PC-3 (cell line): ENCODE measurements at regions of chr13 and their contacts with region 1.

Region 1: GRCh38 chr13:37869756-37870488 is at the start of gene TRPC4:
- DNase-seq: peak; percentile 54
- ATAC-seq: peak; percentile 83
- H3K4me3 ChIP-seq: peak within 1 kb of the TSS; percentile 62
- H3K27ac ChIP-seq: no peak within 1 kb of the TSS
- H3K4me1 ChIP-seq: peaks cover 15% of the 10 kb centered on the region
- H3K27me3 ChIP-seq: peaks cover 72% of the 10 kb centered on the region
- CTCF ChIP-seq: peak; percentile 60
- total RNA-seq, gene TRPC4: 0.22 TPM in 1 of 2 replicates, not detected in the other

Region 2: GRCh38 chr13:37640499-37640898 is 229.4 kb before region 1 on chr13:
- CTCF ChIA-PET with region 1: interaction called, 4 read pairs
- POLR2A ChIA-PET with region 1: no interaction called
- intact Hi-C with region 1: loop called (anchors 5 kb)
- DNase-seq: peak; percentile 58
- ATAC-seq: peak; percentile 80
- H3K4me3 ChIP-seq: no peak overlapping the region
- H3K27ac ChIP-seq: no peak overlapping the region
- H3K4me1 ChIP-seq: no peaks in the 10 kb centered on the region
- H3K27me3 ChIP-seq: peaks cover 18% of the 10 kb centered on the region
- CTCF ChIP-seq: peak; percentile 72

Region 3: GRCh38 chr13:38141792-38142191 is 271.9 kb after region 1 on chr13:
- CTCF ChIA-PET with region 1: no interaction called
- POLR2A ChIA-PET with region 1: no interaction called
- intact Hi-C with region 1: no loop called
- DNase-seq: peak; percentile 45
- ATAC-seq: peak; percentile 37
- H3K4me3 ChIP-seq: no peak overlapping the region
- H3K27ac ChIP-seq: no peak overlapping the region
- H3K4me1 ChIP-seq: peaks cover 5% of the 10 kb centered on the region; the same call in 1 of the 2 replicates
- H3K27me3 ChIP-seq: no peaks in the 10 kb centered on the region
- CTCF ChIP-seq: no peak

Region 4: GRCh38 chr13:38213314-38213713 is 343.4 kb after region 1 on chr13:
- CTCF ChIA-PET with region 1: no interaction called
- POLR2A ChIA-PET with region 1: no interaction called
- intact Hi-C with region 1: loop called (anchors 10 kb)
- DNase-seq: peak; percentile 60
- ATAC-seq: peak; percentile 73
- H3K4me3 ChIP-seq: no peak overlapping the region
- H3K27ac ChIP-seq: no peak overlapping the region
- H3K4me1 ChIP-seq: no peaks in the 10 kb centered on the region
- H3K27me3 ChIP-seq: no peaks in the 10 kb centered on the region
- CTCF ChIP-seq: no peak